Common myeloid progenitor, CD34-positive (primary cell): ENCODE measurements at regions of chr14 and their contacts with region 1.

Region 1: DNA sequence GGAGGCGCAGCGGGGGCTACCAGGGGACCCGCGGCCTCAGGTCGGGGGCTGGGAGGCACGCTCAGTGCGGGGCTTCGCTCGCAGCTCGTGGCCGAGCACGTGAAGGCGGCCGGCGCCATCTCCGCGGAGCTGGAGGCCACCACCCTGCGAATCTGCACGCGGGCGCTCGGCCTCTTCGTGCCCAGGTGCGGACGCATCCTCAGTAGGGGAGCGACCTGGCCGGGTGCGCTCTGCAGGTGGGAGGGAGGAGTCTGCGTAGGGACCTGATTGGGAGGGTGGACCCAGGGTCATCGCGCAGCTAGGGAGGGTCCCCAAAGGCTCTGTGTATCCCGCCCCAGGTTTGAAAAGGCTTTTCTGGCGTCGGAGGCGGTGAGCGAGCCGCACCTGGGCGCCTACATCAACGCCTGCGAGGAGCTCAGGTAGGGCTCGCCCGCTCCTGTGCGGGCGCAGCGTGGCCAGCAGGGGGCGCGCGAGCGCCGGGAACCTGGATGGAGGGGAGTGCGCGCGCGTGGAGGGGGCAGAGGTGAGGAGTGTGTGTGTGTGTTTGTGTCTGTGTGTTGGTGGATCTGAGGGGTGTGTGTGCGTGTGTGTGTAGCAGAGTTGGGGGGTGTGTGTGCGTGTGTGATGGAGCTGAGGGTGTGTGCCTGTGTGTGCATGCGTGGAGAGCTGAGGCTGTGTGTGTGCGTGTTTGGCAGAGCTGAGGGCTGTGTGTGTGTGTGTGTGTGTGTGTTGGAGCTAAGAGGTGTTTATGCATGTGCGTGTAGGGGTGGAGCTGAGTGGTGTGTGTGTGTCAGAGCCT is 10.3 kb downstream of the EXOC3L4 start:
- DNase-seq: peak in 2 of 3 donors; percentile 72 to 75
- H3K4me3 ChIP-seq: peak overlapping the region in 2 of 7 experiments; percentile 7 to 8
- H3K27ac ChIP-seq: no peak overlapping the region
- H3K4me1 ChIP-seq: peaks cover 0 to 48% (median 35%) of the 10 kb centered on the region in 4 experiments
- H3K27me3 ChIP-seq: peaks cover 0 to 41% (median 20%) of the 10 kb centered on the region in 5 experiments

Region 2: DNA sequence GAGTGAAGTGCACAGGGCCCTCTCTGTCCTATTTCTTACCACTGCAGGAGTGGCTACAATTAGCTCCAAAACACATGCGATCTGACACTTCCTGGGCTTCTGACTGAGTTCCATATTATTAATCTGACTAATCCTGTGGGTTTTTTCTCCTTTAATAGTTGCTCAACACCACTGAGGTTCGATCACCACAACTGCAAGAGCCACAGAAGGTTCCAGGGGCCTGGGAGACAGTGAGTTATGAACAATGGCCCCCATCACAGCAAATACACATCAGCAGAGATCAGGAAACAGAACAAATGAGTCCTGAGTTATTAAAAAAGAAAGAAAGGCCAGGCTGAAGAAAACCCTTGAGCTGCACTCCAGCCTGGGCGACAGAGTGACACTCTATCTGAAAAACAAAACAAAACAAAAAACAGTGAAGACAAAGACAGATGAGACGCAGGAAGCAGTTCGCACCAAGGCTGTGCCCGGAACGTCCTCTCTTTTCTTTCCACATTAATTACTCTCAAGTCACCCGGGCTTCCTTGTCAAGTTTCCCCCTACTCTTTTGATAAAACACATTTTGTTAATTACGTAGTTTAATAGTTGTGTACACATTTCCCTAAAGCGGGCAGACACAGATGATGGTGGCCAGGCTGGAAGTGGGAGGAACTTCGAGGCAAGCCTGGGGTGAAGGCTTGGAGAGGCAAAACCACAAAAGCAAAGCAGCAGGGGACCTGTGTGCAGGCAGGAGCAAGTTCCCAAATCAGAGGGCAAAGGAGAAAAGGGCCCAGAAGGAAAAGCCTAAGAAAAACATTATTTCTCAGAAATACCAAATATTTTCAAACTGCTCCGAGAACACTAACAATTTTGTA is 90.2 kb before region 1 on chr14:
- CTCF ChIA-PET with region 1: no interaction called
- POLR2A ChIA-PET with region 1: no interaction called
- DNase-seq: peak; percentile 29 to 49 (median 37)
- H3K4me3 ChIP-seq: peak overlapping the region in 4 of 7 experiments; percentile 38 to 73 (median 40)
- H3K27ac ChIP-seq: peak overlapping the region in 1 of 2 experiments; percentile 52
- H3K4me1 ChIP-seq: peaks cover 0 to 18% (median 14%) of the 10 kb centered on the region in 4 experiments
- H3K27me3 ChIP-seq: peaks cover 0 to 3% (median 0%) of the 10 kb centered on the region in 5 experiments

Region 3: GRCh38 chr14:103028161-103028767 is 76.6 kb before region 1 on chr14:
- CTCF ChIA-PET with region 1: no interaction called
- POLR2A ChIA-PET with region 1: no interaction called
- DNase-seq: no peak
- H3K4me3 ChIP-seq: no peak overlapping the region
- H3K27ac ChIP-seq: no peak overlapping the region
- H3K4me1 ChIP-seq: no peaks in the 10 kb centered on the region
- H3K27me3 ChIP-seq: no peaks in the 10 kb centered on the region

Region 4: GRCh38 chr14:103085106-103086091 is 19.5 kb before region 1 on chr14:
- CTCF ChIA-PET with region 1: interaction called, 14 read pairs
- POLR2A ChIA-PET with region 1: no interaction called
- DNase-seq: no peak
- H3K4me3 ChIP-seq: no peak overlapping the region
- H3K27ac ChIP-seq: no peak overlapping the region
- H3K4me1 ChIP-seq: peaks cover 0 to 11% (median 3%) of the 10 kb centered on the region in 4 experiments
- H3K27me3 ChIP-seq: peaks cover 0 to 52% (median 15%) of the 10 kb centered on the region in 5 experiments

Region 5: GRCh38 chr14:103115883-103116572 is 11.2 kb after region 1 on chr14:
- CTCF ChIA-PET with region 1: interaction called, 50 read pairs
- POLR2A ChIA-PET with region 1: no interaction called
- DNase-seq: no peak
- H3K4me3 ChIP-seq: no peak overlapping the region
- H3K27ac ChIP-seq: no peak overlapping the region
- H3K4me1 ChIP-seq: peaks cover 12 to 87% (median 72%) of the 10 kb centered on the region in 4 experiments
- H3K27me3 ChIP-seq: no peaks in the 10 kb centered on the region

Region 6: DNA sequence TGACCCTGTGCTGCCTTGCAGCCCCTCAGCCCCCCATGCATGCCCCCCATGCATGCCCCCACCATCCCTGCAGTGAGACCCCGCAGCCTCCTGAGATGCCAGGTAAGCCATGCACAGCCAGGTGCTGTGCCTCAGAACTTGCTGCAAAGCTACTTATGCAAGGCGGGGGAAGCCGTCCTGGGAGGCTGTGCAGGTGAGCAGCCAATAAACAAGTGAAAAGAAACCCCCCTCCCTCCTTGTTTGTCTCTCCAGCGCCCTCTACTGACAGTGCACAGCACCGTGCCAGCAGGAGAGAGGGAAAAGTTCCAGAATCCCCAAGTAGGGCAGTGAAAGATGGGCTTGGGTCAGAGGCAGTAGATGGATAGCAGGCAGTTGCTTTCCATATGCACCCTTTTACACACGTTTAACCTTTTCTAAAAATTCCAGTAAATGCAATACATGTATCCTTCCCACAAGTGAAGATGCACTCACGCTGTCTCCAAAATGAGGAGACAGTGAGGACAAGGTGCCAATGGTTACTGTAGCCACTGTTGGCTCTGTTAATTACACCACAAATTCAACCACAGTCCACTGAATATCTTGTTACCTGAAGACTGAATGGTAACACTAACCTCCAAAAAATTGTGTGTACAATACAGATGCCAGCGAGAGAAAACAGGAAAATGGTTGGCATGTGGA is 36.4 kb after region 1 on chr14:
- CTCF ChIA-PET with region 1: interaction called, 179 read pairs
- POLR2A ChIA-PET with region 1: interaction called, 7 read pairs
- DNase-seq: peak; percentile 58 to 75 (median 71)
- H3K4me3 ChIP-seq: no peak overlapping the region
- H3K27ac ChIP-seq: no peak overlapping the region
- H3K4me1 ChIP-seq: peaks cover 0 to 14% (median 7%) of the 10 kb centered on the region in 4 experiments
- H3K27me3 ChIP-seq: peaks cover 0 to 39% (median 6%) of the 10 kb centered on the region in 5 experiments

Region 7: GRCh38 chr14:103292426-103293374 is 187.8 kb after region 1 on chr14:
- CTCF ChIA-PET with region 1: interaction called, 89 read pairs
- POLR2A ChIA-PET with region 1: no interaction called
- DNase-seq: peak; percentile 64 to 78 (median 70)
- H3K4me3 ChIP-seq: no peak overlapping the region
- H3K27ac ChIP-seq: no peak overlapping the region
- H3K4me1 ChIP-seq: no peaks in the 10 kb centered on the region
- H3K27me3 ChIP-seq: peaks cover 0 to 27% (median 8%) of the 10 kb centered on the region in 5 experiments

Region 8: DNA sequence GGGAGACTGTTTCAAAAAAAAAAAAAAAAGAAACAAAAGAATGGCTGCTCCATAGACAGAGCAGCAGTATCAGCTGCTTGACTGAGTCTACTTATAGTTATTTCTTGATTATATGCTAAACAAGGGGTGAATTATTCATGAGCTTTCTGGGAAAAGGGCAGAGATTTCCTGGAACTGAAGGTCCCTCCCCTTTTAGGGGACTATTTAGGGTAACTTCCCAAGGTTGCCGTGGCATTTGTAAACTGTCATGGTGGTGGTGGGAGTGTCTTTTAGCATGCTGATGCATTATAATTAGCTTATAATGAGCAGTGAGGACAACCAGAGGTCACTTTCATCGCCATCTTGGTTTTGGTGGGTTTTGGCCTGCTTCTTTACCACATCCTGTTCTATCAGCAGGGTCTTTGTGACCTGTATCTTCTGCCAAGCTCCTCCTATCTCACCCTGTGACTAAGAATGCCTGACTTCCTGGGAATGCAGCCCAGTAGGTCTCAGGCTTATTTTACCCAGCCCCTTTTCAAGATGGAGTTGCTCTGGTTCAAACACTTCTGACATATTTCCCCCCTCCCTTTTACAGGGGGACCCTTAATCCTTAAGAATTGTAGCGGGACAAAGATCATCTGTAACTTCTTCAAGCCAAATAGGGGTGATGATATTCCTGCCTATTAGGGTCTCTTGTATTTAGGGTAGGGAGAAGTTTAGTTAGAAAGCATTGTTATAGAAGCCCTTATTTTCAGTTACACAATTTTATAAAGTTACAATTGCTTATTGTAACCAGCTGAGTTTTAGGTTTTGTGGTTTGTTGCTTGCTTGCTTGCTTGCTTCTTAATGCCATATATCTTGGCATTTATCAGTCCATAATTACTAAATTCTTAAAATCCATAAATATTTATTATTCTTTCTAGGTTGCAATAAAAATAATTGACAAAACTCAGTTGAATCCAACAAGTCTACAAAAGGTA is 322.9 kb after region 1 on chr14:
- CTCF ChIA-PET with region 1: no interaction called
- POLR2A ChIA-PET with region 1: no interaction called
- DNase-seq: peak; percentile 20 to 71 (median 70)
- H3K4me3 ChIP-seq: no peak overlapping the region
- H3K27ac ChIP-seq: peak overlapping the region in 1 of 2 experiments; percentile 14
- H3K4me1 ChIP-seq: peaks cover 0 to 21% (median 16%) of the 10 kb centered on the region in 4 experiments
- H3K27me3 ChIP-seq: no peaks in the 10 kb centered on the region